ENCODE measurements at regions of chr5 and their contacts with region 1.

Region 1: GRCh38 chr5:79124607-79125006 is 13.0 kb downstream of the BHMT start:
- DNase-seq: no peak
- H3K4me3 ChIP-seq: no peak overlapping the region
- H3K27ac ChIP-seq: no peak overlapping the region
- H3K4me1 ChIP-seq: no peaks in the 10 kb centered on the region
- H3K27me3 ChIP-seq: peaks cover 2% of the 10 kb centered on the region
- CTCF ChIP-seq: no peak

Region 2: GRCh38 chr5:79020861-79021561 is 103.6 kb before region 1 on chr5:
- intact Hi-C with region 1: loop called (anchors 5 kb)
- DNase-seq: peak; percentile 53 to 83 (median 73)
- H3K4me3 ChIP-seq: peak overlapping the region in 1 of 3 donors; percentile 19
- H3K27ac ChIP-seq: no peak overlapping the region
- H3K4me1 ChIP-seq: peaks cover 0 to 7% (median 6%) of the 10 kb centered on the region in 3 donors
- H3K27me3 ChIP-seq: no peaks in the 10 kb centered on the region
- CTCF ChIP-seq: peak; percentile 73

Region 3: DNA sequence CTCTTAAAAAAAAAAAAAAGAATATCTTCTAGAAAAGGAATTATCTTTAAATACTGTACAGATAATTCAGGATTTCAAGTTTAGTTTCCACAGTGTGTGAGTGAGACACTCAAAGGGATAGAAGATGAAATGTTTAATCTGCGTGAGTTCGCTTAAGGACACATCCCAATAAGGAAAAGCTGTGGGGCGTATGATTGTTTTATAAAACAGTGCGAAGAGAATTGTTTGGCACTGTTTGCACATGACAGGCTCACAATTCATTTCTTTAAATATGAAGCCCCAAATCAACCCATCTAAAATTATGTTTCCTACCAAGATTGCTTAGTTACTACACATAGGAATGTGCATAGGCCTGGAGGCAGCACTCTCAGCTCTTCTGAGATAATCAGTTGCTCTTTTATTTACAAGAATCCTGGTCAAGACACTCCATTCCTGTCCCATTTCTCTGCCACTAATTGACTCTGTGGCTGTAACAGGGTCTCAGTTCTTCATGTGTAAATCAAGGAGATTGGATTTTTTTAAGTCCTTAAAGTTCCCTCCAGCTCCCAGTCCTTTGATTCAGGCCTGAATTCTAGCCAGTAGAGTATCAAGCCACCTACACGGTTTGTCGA is 47.1 kb after region 1 on chr5:
- intact Hi-C with region 1: no loop called
- DNase-seq: no peak
- H3K4me3 ChIP-seq: no peak overlapping the region
- H3K27ac ChIP-seq: no peak overlapping the region
- H3K4me1 ChIP-seq: no peaks in the 10 kb centered on the region
- H3K27me3 ChIP-seq: no peaks in the 10 kb centered on the region
- CTCF ChIP-seq: no peak

Measured in kidney (tissue), 22 donors.